ENCODE measurements at regions of chr21 and their contacts with region 1.

Region 1: GRCh38 chr21:39712972-39713371 is 32.0 kb upstream of the IGSF5 start:
- DNase-seq: peak; percentile 45
- H3K4me3 ChIP-seq: no peak overlapping the region
- H3K27ac ChIP-seq: no peak overlapping the region
- H3K4me1 ChIP-seq: no peaks in the 10 kb centered on the region
- H3K27me3 ChIP-seq: no peaks in the 10 kb centered on the region
- CTCF ChIP-seq: no peak

Region 2: DNA sequence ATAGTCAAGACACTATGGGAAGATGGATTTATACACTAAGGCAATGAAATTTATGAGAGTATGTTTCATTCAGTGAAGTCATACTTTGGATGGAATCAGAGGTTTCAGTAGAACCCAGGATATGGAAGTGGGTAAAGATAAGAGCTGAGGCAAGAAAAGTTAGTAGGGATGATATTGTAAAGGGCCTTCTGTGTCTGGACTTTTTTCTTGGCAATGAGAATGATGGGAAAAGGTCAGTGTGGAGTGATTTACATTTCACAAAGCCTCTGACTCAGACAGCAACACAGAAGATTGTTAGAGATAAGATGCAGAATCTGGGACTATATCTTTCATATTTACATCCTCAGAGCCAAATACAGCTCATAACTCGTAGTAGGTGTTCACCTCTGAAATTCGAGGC is 229.0 kb before region 1 on chr21:
- intact Hi-C with region 1: no loop called
- DNase-seq: no peak
- H3K4me3 ChIP-seq: no peak overlapping the region
- H3K27ac ChIP-seq: no peak overlapping the region
- H3K4me1 ChIP-seq: no peaks in the 10 kb centered on the region
- H3K27me3 ChIP-seq: no peaks in the 10 kb centered on the region
- CTCF ChIP-seq: no peak

Region 3: GRCh38 chr21:39519835-39520234 is 193.1 kb before region 1 on chr21:
- intact Hi-C with region 1: loop called (anchors 2 kb)
- DNase-seq: no peak
- H3K4me3 ChIP-seq: no peak overlapping the region
- H3K27ac ChIP-seq: no peak overlapping the region
- H3K4me1 ChIP-seq: no peaks in the 10 kb centered on the region
- H3K27me3 ChIP-seq: no peaks in the 10 kb centered on the region
- CTCF ChIP-seq: no peak

Region 4: DNA sequence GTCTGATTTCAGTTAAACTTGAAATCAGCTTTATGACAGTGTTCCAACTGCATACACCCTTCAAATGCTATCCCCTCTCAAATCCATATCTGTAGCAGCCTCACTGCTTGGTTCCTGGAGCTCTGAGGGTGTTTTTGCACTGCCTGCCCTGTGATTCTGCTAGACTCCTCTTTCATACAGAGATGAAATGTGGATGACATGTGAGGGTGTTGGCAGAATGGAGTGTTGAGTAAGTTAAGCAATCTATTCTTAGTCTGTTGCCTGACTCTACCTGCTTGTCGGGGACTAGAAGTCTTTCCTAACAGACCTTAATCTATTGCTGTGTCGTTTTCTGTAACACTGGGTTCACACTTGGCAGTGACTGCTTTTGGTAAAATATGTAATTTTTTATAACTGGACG is 41.8 kb after region 1 on chr21:
- intact Hi-C with region 1: no loop called
- DNase-seq: no peak
- H3K4me3 ChIP-seq: no peak overlapping the region
- H3K27ac ChIP-seq: no peak overlapping the region
- H3K4me1 ChIP-seq: no peaks in the 10 kb centered on the region
- H3K27me3 ChIP-seq: no peaks in the 10 kb centered on the region
- CTCF ChIP-seq: no peak

Measured in colonic mucosa (tissue), 4 donors.